ENCODE measurements at regions of chr3 and their contacts with region 1.

Region 1: GRCh38 chr3:120013481-120013880 is 80.8 kb downstream of the GSK3B start:
- DNase-seq: no peak
- ATAC-seq: no peak
- H3K4me3 ChIP-seq: no peak overlapping the region
- H3K4me3 Mint-ChIP-seq: no peak overlapping the region
- H3K27ac ChIP-seq: no peak overlapping the region
- H3K27ac Mint-ChIP-seq: no peak overlapping the region
- H3K4me1 ChIP-seq: peaks cover 0 to 14% of the 10 kb centered on the region in 2 donors
- H3K4me1 Mint-ChIP-seq: peaks cover 62% of the 10 kb centered on the region
- H3K27me3 ChIP-seq: no peaks in the 10 kb centered on the region
- H3K27me3 Mint-ChIP-seq: no peaks in the 10 kb centered on the region
- CTCF ChIP-seq: no peak

Region 2: DNA sequence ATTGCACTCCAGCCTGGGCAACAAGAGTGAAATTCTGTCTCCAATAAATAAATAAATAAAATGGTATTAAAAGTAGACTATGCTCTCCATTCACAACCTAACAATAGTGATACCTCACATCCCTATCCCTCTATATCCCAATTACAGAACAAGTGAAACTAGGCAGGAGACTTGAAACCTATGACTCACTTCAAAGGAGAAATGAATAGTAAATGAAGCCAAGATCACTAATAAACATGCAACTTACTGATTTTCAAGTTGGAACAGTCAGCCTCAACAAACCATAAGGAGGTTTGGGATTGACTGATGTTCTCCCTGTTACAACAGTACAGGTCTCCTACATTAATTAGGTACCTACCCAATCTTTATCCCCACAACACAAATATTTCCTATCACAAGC is 22.6 kb before region 1 on chr3:
- CTCF ChIA-PET with region 1: no interaction called
- POLR2A ChIA-PET with region 1: no interaction called
- intact Hi-C with region 1: no loop called
- DNase-seq: no peak
- ATAC-seq: no peak
- H3K4me3 ChIP-seq: no peak overlapping the region
- H3K4me3 Mint-ChIP-seq: no peak overlapping the region
- H3K27ac ChIP-seq: no peak overlapping the region
- H3K27ac Mint-ChIP-seq: no peak overlapping the region
- H3K4me1 ChIP-seq: no peaks in the 10 kb centered on the region
- H3K4me1 Mint-ChIP-seq: peaks cover 10% of the 10 kb centered on the region
- H3K27me3 ChIP-seq: no peaks in the 10 kb centered on the region
- H3K27me3 Mint-ChIP-seq: no peaks in the 10 kb centered on the region
- CTCF ChIP-seq: no peak

Region 3: GRCh38 chr3:120052225-120052624 is 38.7 kb after region 1 on chr3:
- CTCF ChIA-PET with region 1: no interaction called
- POLR2A ChIA-PET with region 1: no interaction called
- intact Hi-C with region 1: loop called (anchors 10 kb)
- DNase-seq: no peak
- ATAC-seq: no peak
- H3K4me3 ChIP-seq: no peak overlapping the region
- H3K4me3 Mint-ChIP-seq: peak overlapping the region; percentile 4
- H3K27ac ChIP-seq: peak overlapping the region in 1 of 2 donors; percentile 1
- H3K27ac Mint-ChIP-seq: no peak overlapping the region
- H3K4me1 ChIP-seq: peaks cover 21 to 38% of the 10 kb centered on the region in 2 donors
- H3K4me1 Mint-ChIP-seq: peaks cover 64% of the 10 kb centered on the region
- H3K27me3 ChIP-seq: no peaks in the 10 kb centered on the region
- H3K27me3 Mint-ChIP-seq: no peaks in the 10 kb centered on the region
- CTCF ChIP-seq: no peak

Measured in B cell (primary cell).